ENCODE measurements at regions of chr5 and their contacts with region 1.

Region 1: DNA sequence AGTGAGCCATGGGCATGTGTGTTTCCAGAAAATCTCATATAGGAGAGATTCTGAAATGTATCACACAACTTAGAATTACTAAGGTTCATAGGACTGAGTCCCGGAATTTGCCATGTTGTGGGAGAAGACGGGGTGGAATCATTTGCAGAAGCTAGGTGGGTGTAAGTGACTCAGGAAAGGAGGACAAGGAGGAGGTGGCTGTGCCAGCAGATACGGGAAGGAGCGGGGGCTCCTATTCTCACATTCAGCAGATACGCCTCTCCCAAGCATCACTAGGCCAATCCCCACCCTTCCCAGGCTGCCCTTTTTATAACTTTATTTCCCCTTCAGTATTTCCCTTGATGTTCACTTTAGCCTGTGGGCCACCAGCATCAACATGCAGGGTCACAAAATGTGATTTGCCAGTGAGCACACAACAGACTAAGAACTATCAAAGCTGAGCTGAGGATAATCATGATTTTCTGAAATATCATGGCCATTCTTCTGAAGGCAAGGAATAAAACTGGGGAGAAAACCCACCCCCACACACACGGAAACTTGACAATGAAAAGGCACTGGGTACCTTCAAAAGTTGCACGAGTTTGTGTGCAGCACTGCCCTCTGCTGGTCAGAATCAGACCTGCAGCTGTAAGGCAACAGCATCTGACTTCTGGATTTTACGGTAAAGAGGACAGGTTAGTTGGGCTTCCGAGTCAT is 133.2 kb downstream of the MTX3 start:
- DNase-seq: peak; percentile 56 to 85 (median 76)
- ATAC-seq: peak; percentile 58
- H3K4me3 ChIP-seq: no peak overlapping the region
- H3K4me3 Mint-ChIP-seq: no peak overlapping the region
- H3K27ac ChIP-seq: no peak overlapping the region
- H3K27ac Mint-ChIP-seq: no peak overlapping the region
- H3K4me1 ChIP-seq: peaks cover 5% of the 10 kb centered on the region
- H3K4me1 Mint-ChIP-seq: peaks cover 2% of the 10 kb centered on the region
- H3K27me3 ChIP-seq: no peaks in the 10 kb centered on the region
- H3K27me3 Mint-ChIP-seq: peaks cover 2% of the 10 kb centered on the region
- CTCF ChIP-seq: peak; percentile 96

Region 2: DNA sequence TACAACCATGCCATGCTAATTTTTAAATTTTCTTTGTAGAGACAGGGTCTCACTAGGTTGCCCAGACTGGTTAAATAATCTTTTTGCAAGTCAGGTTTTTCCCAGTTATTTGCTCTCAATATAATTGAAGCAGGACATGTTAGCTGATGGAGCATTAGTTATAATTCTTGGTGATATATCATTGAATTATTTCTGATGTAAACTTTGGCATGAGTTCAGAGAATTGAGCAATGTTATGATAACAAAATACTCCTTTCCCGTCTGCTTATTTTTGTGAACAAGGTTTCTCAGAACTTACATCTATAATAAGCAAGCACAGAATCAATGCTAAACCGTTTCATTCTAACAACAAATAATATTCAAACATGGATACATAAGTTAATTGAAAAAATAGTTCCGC is 708.4 kb before region 1 on chr5:
- CTCF ChIA-PET with region 1: no interaction called
- POLR2A ChIA-PET with region 1: no interaction called
- intact Hi-C with region 1: no loop called
- DNase-seq: no peak
- ATAC-seq: no peak
- H3K4me3 ChIP-seq: no peak overlapping the region
- H3K4me3 Mint-ChIP-seq: no peak overlapping the region
- H3K27ac ChIP-seq: no peak overlapping the region
- H3K27ac Mint-ChIP-seq: no peak overlapping the region
- H3K4me1 ChIP-seq: no peaks in the 10 kb centered on the region
- H3K4me1 Mint-ChIP-seq: no peaks in the 10 kb centered on the region
- H3K27me3 ChIP-seq: peaks cover 0 to 3% of the 10 kb centered on the region in 2 experiments
- H3K27me3 Mint-ChIP-seq: peaks cover 9% of the 10 kb centered on the region
- CTCF ChIP-seq: no peak

Region 3: DNA sequence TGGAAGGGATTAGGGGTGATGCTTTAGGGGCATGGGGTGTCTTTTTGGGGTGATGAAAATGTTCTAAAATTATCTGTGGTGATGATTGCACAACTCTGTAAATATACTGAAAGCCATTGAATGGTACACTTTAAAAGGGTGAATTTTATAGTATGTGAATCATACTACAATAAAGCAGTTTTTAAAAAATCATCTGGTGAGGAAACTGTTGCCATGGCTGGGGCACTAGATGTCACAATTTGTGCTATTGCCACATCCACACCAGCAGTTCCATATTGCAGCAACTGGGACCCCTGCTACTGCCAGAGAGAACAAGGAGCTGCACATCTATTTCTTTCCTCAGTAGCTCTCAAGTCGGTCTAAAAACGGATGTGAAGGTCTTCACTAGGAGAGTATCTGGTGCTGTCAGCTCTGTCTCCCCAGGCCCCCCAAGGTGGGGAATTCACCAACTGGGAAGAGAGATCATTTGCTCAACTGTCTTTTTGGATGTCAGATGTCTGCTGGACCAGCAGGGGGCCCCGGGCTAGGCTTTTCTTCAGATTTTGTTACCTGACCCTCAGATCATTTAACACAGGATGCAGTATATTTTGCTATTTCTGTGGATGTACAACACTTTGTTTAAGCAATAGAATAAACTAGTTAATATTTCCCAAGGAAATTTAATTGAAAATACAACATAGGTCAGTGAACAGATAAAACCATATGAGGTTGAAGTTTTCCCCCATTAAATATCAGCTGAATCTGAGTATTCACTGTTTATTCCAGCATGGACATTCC is 155.1 kb before region 1 on chr5:
- CTCF ChIA-PET with region 1: interaction called, 11 read pairs
- POLR2A ChIA-PET with region 1: no interaction called
- intact Hi-C with region 1: loop called (anchors 1 kb)
- DNase-seq: peak in 7 of 9 experiments; percentile 5 to 55 (median 32)
- ATAC-seq: no peak
- H3K4me3 ChIP-seq: no peak overlapping the region
- H3K4me3 Mint-ChIP-seq: no peak overlapping the region
- H3K27ac ChIP-seq: no peak overlapping the region
- H3K27ac Mint-ChIP-seq: no peak overlapping the region
- H3K4me1 ChIP-seq: no peaks in the 10 kb centered on the region
- H3K4me1 Mint-ChIP-seq: no peaks in the 10 kb centered on the region
- H3K27me3 ChIP-seq: no peaks in the 10 kb centered on the region
- H3K27me3 Mint-ChIP-seq: no peaks in the 10 kb centered on the region
- CTCF ChIP-seq: peak; percentile 73

Region 4: GRCh38 chr5:79840084-79840990 is 17.5 kb before region 1 on chr5:
- CTCF ChIA-PET with region 1: interaction called, 16 read pairs
- POLR2A ChIA-PET with region 1: no interaction called
- intact Hi-C with region 1: no loop called
- DNase-seq: no peak
- ATAC-seq: no peak
- H3K4me3 ChIP-seq: no peak overlapping the region
- H3K4me3 Mint-ChIP-seq: no peak overlapping the region
- H3K27ac ChIP-seq: no peak overlapping the region
- H3K27ac Mint-ChIP-seq: no peak overlapping the region
- H3K4me1 ChIP-seq: no peaks in the 10 kb centered on the region
- H3K4me1 Mint-ChIP-seq: no peaks in the 10 kb centered on the region
- H3K27me3 ChIP-seq: no peaks in the 10 kb centered on the region
- H3K27me3 Mint-ChIP-seq: peaks cover 11% of the 10 kb centered on the region
- CTCF ChIP-seq: no peak

Region 5: DNA sequence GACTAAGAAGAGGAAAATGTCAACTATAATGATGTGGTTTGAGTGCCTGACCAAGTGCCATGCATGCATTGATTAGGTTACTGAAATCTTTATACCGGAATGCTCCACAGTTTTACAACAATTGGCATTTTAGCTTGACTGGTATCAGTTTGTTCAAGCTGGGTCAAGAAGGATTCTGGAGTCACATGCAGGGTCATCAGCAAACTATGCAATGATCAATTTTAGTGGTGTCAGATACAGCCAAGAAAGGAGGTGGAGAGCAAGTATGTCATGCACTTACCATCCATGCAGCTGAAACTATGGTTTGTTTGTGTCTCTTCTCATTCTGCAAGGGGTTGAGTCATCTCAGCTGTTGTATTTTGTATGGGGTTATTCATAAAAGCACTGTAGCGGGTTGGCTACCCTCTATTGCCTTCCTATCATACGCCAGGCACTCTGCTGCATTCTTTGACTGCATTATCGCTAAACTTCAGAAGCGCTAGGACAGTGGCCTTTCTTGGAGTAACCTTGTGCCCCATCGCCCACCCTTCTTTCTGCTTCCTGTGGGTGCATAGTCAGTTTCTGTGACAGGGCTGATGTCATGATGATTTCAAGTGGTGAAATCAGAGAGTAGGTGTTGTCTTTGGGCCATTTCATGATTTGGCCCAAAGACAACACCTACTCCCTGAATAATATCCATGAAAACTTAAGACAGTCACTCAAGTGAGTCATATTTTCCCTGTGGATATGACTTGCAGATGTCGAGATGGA is 12.2 kb before region 1 on chr5:
- CTCF ChIA-PET with region 1: interaction called, 16 read pairs
- POLR2A ChIA-PET with region 1: no interaction called
- intact Hi-C with region 1: no loop called
- DNase-seq: no peak
- ATAC-seq: no peak
- H3K4me3 ChIP-seq: no peak overlapping the region
- H3K4me3 Mint-ChIP-seq: no peak overlapping the region
- H3K27ac ChIP-seq: no peak overlapping the region
- H3K27ac Mint-ChIP-seq: no peak overlapping the region
- H3K4me1 ChIP-seq: no peaks in the 10 kb centered on the region
- H3K4me1 Mint-ChIP-seq: no peaks in the 10 kb centered on the region
- H3K27me3 ChIP-seq: no peaks in the 10 kb centered on the region
- H3K27me3 Mint-ChIP-seq: peaks cover 8% of the 10 kb centered on the region
- CTCF ChIP-seq: no peak